GM13977 (cell line): ENCODE measurements at regions of chr15 and their contacts with region 1.

Region 1: DNA sequence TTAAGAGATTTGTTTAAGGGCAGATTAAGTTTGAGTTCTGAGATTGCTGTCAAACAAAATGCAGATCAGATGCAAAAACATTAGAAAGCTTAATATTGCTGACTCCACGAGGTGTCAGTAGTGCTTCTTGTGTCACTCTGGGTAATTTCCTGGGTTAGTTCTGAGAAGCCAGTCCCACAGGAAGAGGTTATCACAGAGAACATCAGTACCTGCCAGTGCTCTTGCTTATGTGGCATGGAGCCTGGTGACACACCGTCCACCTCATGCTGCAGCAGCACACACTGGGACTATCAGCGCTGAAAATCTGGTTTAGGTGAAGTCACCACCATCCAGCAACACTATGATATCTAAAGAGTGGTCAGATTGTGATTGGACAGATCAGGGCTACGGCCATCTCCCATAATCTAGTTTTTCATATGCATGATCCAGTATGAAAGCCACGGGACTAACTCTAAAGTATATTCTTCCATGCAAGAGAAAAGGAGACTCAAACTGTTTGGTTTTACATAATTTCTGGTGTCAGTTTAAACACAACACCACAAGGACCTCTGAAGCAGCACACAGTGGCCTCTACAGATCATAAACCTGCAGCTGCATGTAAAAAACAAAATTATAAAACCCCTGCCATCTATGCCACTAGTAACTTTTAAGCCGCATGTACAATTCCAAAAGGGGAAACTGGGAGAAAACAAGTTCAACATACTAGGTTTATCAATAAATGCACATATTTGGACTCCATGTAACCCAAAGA is 36.1 kb upstream of the MYO5C start:
- DNase-seq: peak; percentile 66
- CTCF ChIP-seq: peak; percentile 68

Region 2: DNA sequence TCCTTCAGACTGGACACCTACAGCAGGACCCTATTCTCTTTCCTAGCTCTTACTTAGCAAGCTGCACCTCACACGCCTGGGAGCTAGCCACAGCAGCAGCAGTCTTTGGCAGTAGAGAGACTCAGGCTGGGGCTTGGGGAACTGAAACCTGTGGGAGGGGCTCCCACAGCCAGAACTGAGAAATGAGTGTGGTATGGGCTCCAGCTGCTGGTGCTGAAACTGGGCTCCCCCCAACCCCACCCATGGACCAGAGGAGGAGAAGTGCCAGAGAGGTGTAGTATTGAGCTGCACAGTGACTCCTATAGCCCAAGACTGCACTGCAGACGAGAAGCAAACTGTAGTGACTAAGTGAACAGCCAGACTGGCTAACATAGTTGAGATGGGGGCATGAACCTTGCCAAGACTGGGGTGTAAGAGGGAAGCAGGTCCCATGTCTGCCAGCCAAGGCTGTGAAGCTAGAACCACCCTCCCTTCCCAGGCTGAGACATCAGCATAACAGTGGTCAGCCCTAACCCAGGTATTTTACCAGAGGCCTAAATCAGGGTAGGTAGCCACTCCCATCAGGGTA is 134.6 kb after region 1 on chr15:
- in situ Hi-C with region 1: loop called (anchors 25 kb)
- DNase-seq: peak; percentile 87
- CTCF ChIP-seq: peak; percentile 51